ENCODE measurements at regions of chr22 and their contacts with region 1.

Region 1: GRCh38 chr22:24175160-24175808 is 6.0 kb upstream of the SUSD2 start:
- DNase-seq: no peak
- H3K4me3 ChIP-seq: no peak overlapping the region
- CTCF ChIP-seq: peak; percentile 96

Region 2: DNA sequence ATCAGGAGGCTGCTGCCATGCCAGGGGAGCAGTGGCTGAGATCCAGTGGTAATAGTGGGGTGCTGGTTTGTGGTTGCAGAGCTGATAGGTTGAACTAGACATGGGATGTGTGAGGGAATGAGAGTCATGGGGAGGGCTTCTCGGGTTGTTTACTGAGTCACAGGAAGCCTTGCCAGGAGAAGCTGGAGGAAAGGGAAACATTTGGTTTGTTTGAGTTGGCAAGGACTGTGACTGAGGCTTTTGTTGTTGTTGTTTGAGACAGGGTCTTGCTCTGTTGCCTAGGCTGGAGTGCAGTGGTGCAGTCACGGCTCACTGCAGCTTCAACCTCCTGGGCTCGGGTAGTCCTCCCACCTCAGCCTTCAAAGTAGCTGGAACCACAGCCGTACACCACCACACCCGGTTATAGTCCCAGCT is 114.9 kb before region 1 on chr22:
- CTCF ChIA-PET with region 1: interaction called, 36 read pairs
- POLR2A ChIA-PET with region 1: no interaction called
- DNase-seq: peak; percentile 79
- H3K4me3 ChIP-seq: no peak overlapping the region
- CTCF ChIP-seq: no peak

Region 3: GRCh38 chr22:24106385-24107381 is 68.6 kb before region 1 on chr22:
- CTCF ChIA-PET with region 1: interaction called, 52 read pairs
- POLR2A ChIA-PET with region 1: interaction called, 3 read pairs
- DNase-seq: no peak
- H3K4me3 ChIP-seq: no peak overlapping the region
- CTCF ChIP-seq: peak; percentile 13

Region 4: GRCh38 chr22:24133187-24133965 is 41.9 kb before region 1 on chr22:
- CTCF ChIA-PET with region 1: interaction called, 22 read pairs
- POLR2A ChIA-PET with region 1: no interaction called
- DNase-seq: no peak
- H3K4me3 ChIP-seq: no peak overlapping the region
- CTCF ChIP-seq: peak; percentile 39

Region 5: GRCh38 chr22:24146194-24146616 is 29.1 kb before region 1 on chr22:
- CTCF ChIA-PET with region 1: interaction called, 10 read pairs
- POLR2A ChIA-PET with region 1: no interaction called
- DNase-seq: peak; percentile 75
- H3K4me3 ChIP-seq: no peak overlapping the region; the same call in 1 of the 2 replicates
- CTCF ChIP-seq: no peak

Measured in AG04449 (cell line).